ENCODE measurements at regions of chr10 and their contacts with region 1.

Region 1: GRCh38 chr10:34666008-34666705 is 148.9 kb downstream of the PARD3 start:
- DNase-seq: peak; percentile 81
- H3K4me3 ChIP-seq: no peak overlapping the region
- H3K27ac ChIP-seq: no peak overlapping the region
- H3K27me3 ChIP-seq: no peaks in the 10 kb centered on the region
- CTCF ChIP-seq: peak; percentile 73

Region 2: GRCh38 chr10:34655286-34656170 is 10.6 kb before region 1 on chr10:
- CTCF ChIA-PET with region 1: interaction called, 13 read pairs
- POLR2A ChIA-PET with region 1: no interaction called
- DNase-seq: peak; percentile 39
- H3K4me3 ChIP-seq: no peak overlapping the region
- H3K27ac ChIP-seq: no peak overlapping the region
- H3K27me3 ChIP-seq: no peaks in the 10 kb centered on the region
- CTCF ChIP-seq: peak; percentile 80

Region 3: DNA sequence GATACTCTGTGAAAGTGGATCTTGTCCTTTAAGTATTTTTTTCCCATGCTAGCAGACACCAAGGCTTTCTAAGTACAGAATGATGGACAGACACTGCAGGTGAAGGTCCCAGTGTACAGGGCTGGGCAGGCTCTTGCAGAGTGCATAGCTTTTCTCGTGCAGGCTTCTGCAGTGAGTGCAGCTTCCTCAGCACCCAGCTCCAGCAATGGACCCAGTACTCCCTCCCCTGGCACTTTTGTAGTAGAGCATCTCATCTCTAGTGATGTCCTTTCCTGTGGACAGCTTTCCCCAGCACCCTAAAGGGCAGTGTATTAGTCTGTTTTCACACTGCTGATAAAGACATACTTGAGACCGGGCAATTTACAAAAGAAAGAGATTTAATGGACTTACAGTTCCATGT is 319.7 kb after region 1 on chr10:
- CTCF ChIA-PET with region 1: interaction called, 12 read pairs
- POLR2A ChIA-PET with region 1: no interaction called
- DNase-seq: no peak
- H3K4me3 ChIP-seq: no peak overlapping the region
- H3K27ac ChIP-seq: no peak overlapping the region
- H3K27me3 ChIP-seq: no peaks in the 10 kb centered on the region
- CTCF ChIP-seq: peak; percentile 38